IMR-90 (cell line): ENCODE measurements at regions of chr16 and their contacts with region 1.

Region 1: GRCh38 chr16:78122774-78123315 is 23.4 kb downstream of the WWOX start:
- DNase-seq: peak; percentile 53
- ATAC-seq: peak; percentile 92
- H3K4me3 ChIP-seq: no peak overlapping the region
- H3K27ac ChIP-seq: peak overlapping the region; percentile 29; the same call in 1 of the 2 replicates
- H3K4me1 ChIP-seq: peaks cover 4% of the 10 kb centered on the region; the same call in 1 of the 2 replicates
- H3K27me3 ChIP-seq: no peaks in the 10 kb centered on the region
- CTCF ChIP-seq: peak; percentile 61
- POLR2A ChIP-seq: no peak
- RAD21 ChIP-seq: peak; percentile 65

Region 2: GRCh38 chr16:77822661-77823060 is 300.2 kb before region 1 on chr16:
- CTCF ChIA-PET with region 1: no interaction called
- POLR2A ChIA-PET with region 1: no interaction called
- dilution Hi-C with region 1: no loop called
- in situ Hi-C with region 1: no loop called
- intact Hi-C with region 1: no loop called
- DNase-seq: no peak
- ATAC-seq: no peak
- H3K4me3 ChIP-seq: no peak overlapping the region
- H3K27ac ChIP-seq: no peak overlapping the region
- H3K4me1 ChIP-seq: no peaks in the 10 kb centered on the region
- H3K27me3 ChIP-seq: no peaks in the 10 kb centered on the region
- CTCF ChIP-seq: no peak
- POLR2A ChIP-seq: no peak
- RAD21 ChIP-seq: no peak

Region 3: GRCh38 chr16:78235168-78235800 is 112.4 kb after region 1 on chr16:
- CTCF ChIA-PET with region 1: interaction called, 4 read pairs
- POLR2A ChIA-PET with region 1: no interaction called
- dilution Hi-C with region 1: no loop called
- in situ Hi-C with region 1: loop called (anchors 5 kb)
- intact Hi-C with region 1: loop called (anchors 1 kb)
- DNase-seq: peak; percentile 57
- ATAC-seq: peak; percentile 95
- H3K4me3 ChIP-seq: no peak overlapping the region
- H3K27ac ChIP-seq: no peak overlapping the region
- H3K4me1 ChIP-seq: no peaks in the 10 kb centered on the region; the same call in 1 of the 2 replicates
- H3K27me3 ChIP-seq: no peaks in the 10 kb centered on the region; the same call in 1 of the 2 replicates
- CTCF ChIP-seq: peak; percentile 74
- POLR2A ChIP-seq: no peak
- RAD21 ChIP-seq: peak; percentile 58

Region 4: GRCh38 chr16:78437352-78437968 is 314.6 kb after region 1 on chr16:
- CTCF ChIA-PET with region 1: no interaction called
- POLR2A ChIA-PET with region 1: no interaction called
- dilution Hi-C with region 1: no loop called
- in situ Hi-C with region 1: no loop called
- intact Hi-C with region 1: loop called (anchors 2 kb)
- DNase-seq: peak; percentile 1
- ATAC-seq: no peak
- H3K4me3 ChIP-seq: no peak overlapping the region
- H3K27ac ChIP-seq: no peak overlapping the region
- H3K4me1 ChIP-seq: no peaks in the 10 kb centered on the region
- H3K27me3 ChIP-seq: no peaks in the 10 kb centered on the region
- CTCF ChIP-seq: peak; percentile 46
- POLR2A ChIP-seq: no peak
- RAD21 ChIP-seq: no peak

Region 5: GRCh38 chr16:78570399-78571141 is 447.7 kb after region 1 on chr16:
- CTCF ChIA-PET with region 1: no interaction called
- POLR2A ChIA-PET with region 1: no interaction called
- dilution Hi-C with region 1: no loop called
- in situ Hi-C with region 1: no loop called
- intact Hi-C with region 1: no loop called
- DNase-seq: no peak
- ATAC-seq: no peak
- H3K4me3 ChIP-seq: no peak overlapping the region
- H3K27ac ChIP-seq: no peak overlapping the region
- H3K4me1 ChIP-seq: no peaks in the 10 kb centered on the region
- H3K27me3 ChIP-seq: no peaks in the 10 kb centered on the region
- CTCF ChIP-seq: no peak
- POLR2A ChIP-seq: no peak
- RAD21 ChIP-seq: no peak

Region 6: DNA sequence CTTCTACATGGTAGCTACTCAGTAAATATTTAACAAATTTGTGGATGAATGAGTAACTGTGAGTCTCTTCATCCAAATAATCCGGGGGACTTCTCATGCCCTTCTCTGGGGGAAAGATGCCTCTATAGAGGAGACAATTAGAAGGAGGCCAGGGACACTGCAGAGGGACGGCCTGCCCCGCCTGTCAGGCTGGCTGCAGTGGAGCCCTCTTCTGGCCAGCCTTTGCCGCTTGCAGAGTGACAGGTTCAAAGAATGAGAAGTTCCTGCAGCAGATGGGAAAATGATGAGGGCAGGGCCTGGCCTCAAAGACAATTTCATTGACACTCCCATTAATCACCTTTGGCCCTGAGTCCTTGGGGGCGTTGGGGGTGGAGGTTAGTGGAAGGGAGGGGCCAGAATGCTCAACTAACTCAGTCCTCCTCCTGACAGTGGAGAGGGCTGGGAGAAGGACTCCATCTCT is 1138.7 kb after region 1 on chr16:
- CTCF ChIA-PET with region 1: no interaction called
- POLR2A ChIA-PET with region 1: no interaction called
- dilution Hi-C with region 1: no loop called
- in situ Hi-C with region 1: no loop called
- intact Hi-C with region 1: loop called (anchors 10 kb)
- DNase-seq: no peak
- ATAC-seq: no peak
- H3K4me3 ChIP-seq: no peak overlapping the region
- H3K27ac ChIP-seq: no peak overlapping the region
- H3K4me1 ChIP-seq: no peaks in the 10 kb centered on the region
- H3K27me3 ChIP-seq: no peaks in the 10 kb centered on the region
- CTCF ChIP-seq: no peak
- POLR2A ChIP-seq: no peak
- RAD21 ChIP-seq: no peak